Caco-2 (cell line): ENCODE measurements at regions of chr5 and their contacts with region 1.

Region 1: GRCh38 chr5:171913987-171914273 is 92.5 kb downstream of the FBXW11 start:
- DNase-seq: no peak
- H3K4me3 ChIP-seq: no peak overlapping the region
- H3K4me3 Mint-ChIP-seq: no peak overlapping the region
- H3K27ac Mint-ChIP-seq: no peak overlapping the region
- H3K4me1 ChIP-seq: no peaks in the 10 kb centered on the region
- H3K4me1 Mint-ChIP-seq: peaks cover 4% of the 10 kb centered on the region
- H3K27me3 ChIP-seq: no peaks in the 10 kb centered on the region
- H3K27me3 Mint-ChIP-seq: no peaks in the 10 kb centered on the region
- CTCF ChIP-seq: no peak

Region 2: GRCh38 chr5:171997024-171997423 is 83.1 kb after region 1 on chr5:
- CTCF ChIA-PET with region 1: interaction called, 3 read pairs
- POLR2A ChIA-PET with region 1: no interaction called
- intact Hi-C with region 1: loop called (anchors 2 kb)
- DNase-seq: peak in 1 of 2 experiments; percentile 34
- H3K4me3 ChIP-seq: no peak overlapping the region
- H3K4me3 Mint-ChIP-seq: no peak overlapping the region
- H3K27ac Mint-ChIP-seq: no peak overlapping the region
- H3K4me1 ChIP-seq: peaks cover 13% of the 10 kb centered on the region
- H3K4me1 Mint-ChIP-seq: peaks cover 37% of the 10 kb centered on the region
- H3K27me3 ChIP-seq: no peaks in the 10 kb centered on the region
- H3K27me3 Mint-ChIP-seq: no peaks in the 10 kb centered on the region
- CTCF ChIP-seq: no peak

Region 3: DNA sequence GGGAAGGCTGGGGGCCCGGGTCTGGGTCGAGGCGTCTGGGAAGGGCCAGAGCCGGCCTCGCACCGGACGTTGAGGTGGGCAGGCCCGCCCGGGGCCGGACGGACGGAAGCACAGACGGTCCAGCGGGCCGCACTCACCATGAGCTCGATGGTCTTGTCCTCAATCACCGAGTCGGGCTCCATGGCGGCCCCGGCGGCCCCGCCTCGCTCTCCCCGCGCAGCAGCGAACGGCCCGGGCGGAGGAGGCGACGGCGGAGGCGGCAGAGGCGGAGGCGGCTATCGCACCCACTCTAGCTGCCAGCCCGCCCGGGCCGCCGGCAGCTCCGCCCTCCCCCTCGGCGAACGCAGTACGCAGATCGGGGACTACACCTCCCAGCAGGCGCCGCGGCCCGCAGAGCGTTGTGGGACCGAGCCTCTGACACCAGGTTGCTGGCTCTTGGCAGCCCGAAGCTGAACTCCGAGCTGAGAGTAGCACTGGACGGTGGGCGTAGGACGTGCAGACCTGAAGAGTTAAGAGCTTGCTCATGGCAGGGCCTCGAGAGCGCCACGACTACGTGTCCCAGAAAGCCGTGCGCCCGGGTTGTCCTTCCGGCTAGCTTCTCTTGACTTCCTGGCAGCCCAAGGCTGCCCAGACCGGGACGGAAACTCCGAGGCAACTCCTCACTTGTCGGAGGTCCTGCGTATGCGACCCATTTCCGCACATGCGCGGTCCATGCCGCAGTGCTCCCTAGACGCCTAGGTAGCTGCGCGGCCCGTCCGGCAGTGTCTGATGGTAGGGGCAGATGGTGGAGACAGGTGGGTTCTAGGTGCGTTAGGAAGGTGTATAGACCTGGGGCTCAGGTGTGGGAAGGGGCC is 92.6 kb after region 1 on chr5 and contains the start of gene FBXW11:
- CTCF ChIA-PET with region 1: interaction called, 15 read pairs
- POLR2A ChIA-PET with region 1: interaction called, 14 read pairs
- intact Hi-C with region 1: no loop called
- DNase-seq: peak; percentile 95 to 98
- H3K4me3 ChIP-seq: peak within 1 kb of the TSS; percentile 45
- H3K4me3 Mint-ChIP-seq: peak within 1 kb of the TSS; percentile 90
- H3K27ac Mint-ChIP-seq: peak within 1 kb of the TSS; percentile 92
- H3K4me1 ChIP-seq: peaks cover 32% of the 10 kb centered on the region
- H3K4me1 Mint-ChIP-seq: peaks cover 37% of the 10 kb centered on the region
- H3K27me3 ChIP-seq: no peaks in the 10 kb centered on the region
- H3K27me3 Mint-ChIP-seq: no peaks in the 10 kb centered on the region
- CTCF ChIP-seq: no peak
- total RNA-seq, gene FBXW11: 46.2 and 46.3 TPM in 2 replicates

Region 4: GRCh38 chr5:172044631-172045314 is 130.8 kb after region 1 on chr5:
- CTCF ChIA-PET with region 1: interaction called, 19 read pairs
- POLR2A ChIA-PET with region 1: no interaction called
- intact Hi-C with region 1: loop called (anchors 1 kb)
- DNase-seq: no peak
- H3K4me3 ChIP-seq: no peak overlapping the region
- H3K4me3 Mint-ChIP-seq: no peak overlapping the region
- H3K27ac Mint-ChIP-seq: no peak overlapping the region
- H3K4me1 ChIP-seq: no peaks in the 10 kb centered on the region
- H3K4me1 Mint-ChIP-seq: no peaks in the 10 kb centered on the region
- H3K27me3 ChIP-seq: no peaks in the 10 kb centered on the region
- H3K27me3 Mint-ChIP-seq: peaks cover 2% of the 10 kb centered on the region
- CTCF ChIP-seq: no peak

Region 5: DNA sequence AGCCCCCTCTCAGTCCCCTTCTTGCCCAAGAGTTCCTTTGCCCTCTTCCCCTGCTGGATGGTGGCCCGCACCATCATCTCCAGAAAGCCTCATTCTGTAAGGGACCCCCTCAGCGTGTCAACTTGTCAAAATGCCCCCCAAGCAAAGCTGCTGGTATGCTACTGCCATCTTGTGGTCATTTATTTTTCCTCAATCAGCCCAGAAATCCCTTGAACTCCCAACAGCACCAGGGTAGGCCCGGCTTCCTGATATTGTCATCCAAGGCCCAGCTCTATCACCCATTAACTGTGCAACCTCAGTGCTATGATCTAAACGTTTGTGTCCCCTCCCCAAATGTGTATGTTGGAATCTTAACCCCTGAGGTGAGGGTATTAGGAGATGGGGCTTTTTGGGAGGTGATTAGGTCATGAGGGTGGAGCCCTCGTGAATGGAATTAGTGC is 145.8 kb after region 1 on chr5:
- CTCF ChIA-PET with region 1: interaction called, 41 read pairs
- POLR2A ChIA-PET with region 1: no interaction called
- intact Hi-C with region 1: loop called (anchors 1 kb)
- DNase-seq: peak in 1 of 2 experiments; percentile 21
- H3K4me3 ChIP-seq: no peak overlapping the region
- H3K4me3 Mint-ChIP-seq: no peak overlapping the region
- H3K27ac Mint-ChIP-seq: no peak overlapping the region
- H3K4me1 ChIP-seq: no peaks in the 10 kb centered on the region
- H3K4me1 Mint-ChIP-seq: no peaks in the 10 kb centered on the region
- H3K27me3 ChIP-seq: no peaks in the 10 kb centered on the region
- H3K27me3 Mint-ChIP-seq: no peaks in the 10 kb centered on the region
- CTCF ChIP-seq: peak; percentile 57 to 73

Region 6: DNA sequence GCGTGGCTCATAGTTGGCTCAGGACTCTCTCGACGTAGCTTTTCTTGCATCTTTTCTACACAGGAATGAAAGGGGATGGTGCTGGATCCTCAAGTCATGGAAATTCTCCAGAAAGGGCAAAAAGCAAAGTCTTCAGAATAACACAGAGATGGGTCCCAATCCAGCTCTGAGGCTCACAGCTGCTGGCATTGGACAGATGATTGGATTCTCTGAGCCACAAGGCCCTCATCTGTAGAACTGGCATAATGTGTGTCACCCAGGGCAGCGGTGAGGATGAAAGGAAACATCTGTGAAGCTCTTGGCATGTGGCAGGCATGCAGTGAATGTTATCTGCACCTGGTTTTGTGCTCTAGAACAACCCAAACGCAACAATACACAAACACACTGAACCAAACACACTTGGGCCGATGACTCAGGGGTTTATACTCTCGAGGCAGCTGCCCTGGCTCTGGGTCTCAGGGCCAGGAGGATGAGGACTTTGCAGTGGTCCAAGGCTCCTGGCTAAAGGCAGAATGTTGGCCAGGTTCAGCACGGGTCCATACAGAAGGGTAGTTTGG is 433.6 kb after region 1 on chr5:
- CTCF ChIA-PET with region 1: no interaction called
- POLR2A ChIA-PET with region 1: no interaction called
- intact Hi-C with region 1: no loop called
- DNase-seq: peak in 1 of 2 experiments; percentile 18
- H3K4me3 ChIP-seq: no peak overlapping the region
- H3K4me3 Mint-ChIP-seq: peak overlapping the region; percentile 45
- H3K27ac Mint-ChIP-seq: peak overlapping the region; percentile 90
- H3K4me1 ChIP-seq: peaks cover 32% of the 10 kb centered on the region
- H3K4me1 Mint-ChIP-seq: peaks cover 35% of the 10 kb centered on the region
- H3K27me3 ChIP-seq: no peaks in the 10 kb centered on the region
- H3K27me3 Mint-ChIP-seq: no peaks in the 10 kb centered on the region
- CTCF ChIP-seq: no peak

Region 7: GRCh38 chr5:172454358-172455086 is 540.6 kb after region 1 on chr5 and contains the start of gene SH3PXD2B:
- CTCF ChIA-PET with region 1: no interaction called
- POLR2A ChIA-PET with region 1: no interaction called
- intact Hi-C with region 1: no loop called
- DNase-seq: peak; percentile 82 to 83
- H3K4me3 ChIP-seq: peak within 1 kb of the TSS; percentile 85
- H3K4me3 Mint-ChIP-seq: peak within 1 kb of the TSS; percentile 78
- H3K27ac Mint-ChIP-seq: peak within 1 kb of the TSS; percentile 40
- H3K4me1 ChIP-seq: 0 out of 2 replicates have a peak, but pooled peaks cover 4% of the 10 kb centered on the region
- H3K4me1 Mint-ChIP-seq: peaks cover 26% of the 10 kb centered on the region
- H3K27me3 ChIP-seq: no peaks in the 10 kb centered on the region
- H3K27me3 Mint-ChIP-seq: no peaks in the 10 kb centered on the region
- CTCF ChIP-seq: no peak
- total RNA-seq, gene SH3PXD2B: 11.5 and 12.9 TPM in 2 replicates

Region 8: GRCh38 chr5:172943283-172943841 is 1029.4 kb after region 1 on chr5:
- CTCF ChIA-PET with region 1: no interaction called
- POLR2A ChIA-PET with region 1: no interaction called
- intact Hi-C with region 1: no loop called
- DNase-seq: no peak
- H3K4me3 ChIP-seq: no peak overlapping the region
- H3K4me3 Mint-ChIP-seq: no peak overlapping the region
- H3K27ac Mint-ChIP-seq: no peak overlapping the region
- H3K4me1 ChIP-seq: no peaks in the 10 kb centered on the region
- H3K4me1 Mint-ChIP-seq: no peaks in the 10 kb centered on the region
- H3K27me3 ChIP-seq: no peaks in the 10 kb centered on the region
- H3K27me3 Mint-ChIP-seq: no peaks in the 10 kb centered on the region
- CTCF ChIP-seq: no peak